Activated B cell treated with CpG ODN at 0.5 μM for 24 hours (primary cell): ENCODE measurements at regions of chr7 and their contacts with region 1.

Region 1: GRCh38 chr7:24819916-24820689 is 62.8 kb upstream of the GSDME start:
- DNase-seq: peak; percentile 45
- ATAC-seq: peak; percentile 56
- H3K4me3 Mint-ChIP-seq: peak overlapping the region; percentile 80
- H3K27ac Mint-ChIP-seq: peak overlapping the region; percentile 94
- H3K4me1 Mint-ChIP-seq: peaks cover 40% of the 10 kb centered on the region
- H3K27me3 Mint-ChIP-seq: no peaks in the 10 kb centered on the region
- CTCF ChIP-seq: peak; percentile 74

Region 2: GRCh38 chr7:23373151-23374004 is 1446.7 kb before region 1 on chr7:
- CTCF ChIA-PET with region 1: no interaction called
- POLR2A ChIA-PET with region 1: no interaction called
- intact Hi-C with region 1: loop called (anchors 10 kb)
- DNase-seq: peak; percentile 28
- ATAC-seq: peak; percentile 69
- H3K4me3 Mint-ChIP-seq: peak overlapping the region; percentile 68
- H3K27ac Mint-ChIP-seq: peak overlapping the region; percentile 94
- H3K4me1 Mint-ChIP-seq: peaks cover 70% of the 10 kb centered on the region
- H3K27me3 Mint-ChIP-seq: no peaks in the 10 kb centered on the region
- CTCF ChIP-seq: no peak

Region 3: DNA sequence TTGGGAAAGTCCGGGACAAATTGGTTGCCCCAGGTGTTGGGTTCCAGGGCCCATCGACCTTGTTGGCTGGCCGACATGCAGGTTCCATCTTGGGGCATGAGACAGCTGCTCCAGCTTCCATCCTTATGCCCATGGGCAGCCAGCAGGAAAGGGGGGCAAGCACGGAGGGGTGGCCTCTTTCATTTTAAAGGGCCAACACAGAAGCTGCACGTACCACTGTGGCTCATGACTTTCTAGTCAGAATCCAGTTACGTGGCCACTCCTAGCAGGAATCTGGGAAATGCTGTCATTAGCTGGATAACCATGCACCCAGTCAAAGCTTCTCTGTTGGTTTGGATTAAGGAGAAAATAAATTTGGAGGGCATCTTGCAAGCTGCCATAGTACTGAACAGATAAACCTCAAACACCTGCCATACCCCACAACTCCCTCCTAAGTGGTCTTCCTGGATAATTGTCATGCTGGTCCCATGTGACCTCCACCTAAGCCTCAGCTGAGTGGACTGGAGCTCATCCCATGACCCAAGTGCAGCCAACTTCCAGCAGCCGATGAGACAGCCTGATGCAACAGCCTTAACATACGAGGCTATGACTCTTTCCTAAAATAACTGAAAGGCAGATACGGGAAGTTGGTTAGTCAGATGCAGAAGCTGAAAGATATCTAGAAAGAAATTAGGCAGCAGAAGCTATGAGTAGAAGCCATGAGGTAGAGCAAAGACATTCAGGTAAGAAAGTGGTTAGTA is 41.4 kb before region 1 on chr7:
- CTCF ChIA-PET with region 1: no interaction called
- POLR2A ChIA-PET with region 1: no interaction called
- intact Hi-C with region 1: no loop called
- DNase-seq: no peak
- ATAC-seq: no peak
- H3K4me3 Mint-ChIP-seq: no peak overlapping the region
- H3K27ac Mint-ChIP-seq: no peak overlapping the region
- H3K4me1 Mint-ChIP-seq: peaks cover 6% of the 10 kb centered on the region
- H3K27me3 Mint-ChIP-seq: no peaks in the 10 kb centered on the region
- CTCF ChIP-seq: no peak

Region 4: GRCh38 chr7:24851786-24852185 is 31.7 kb after region 1 on chr7:
- CTCF ChIA-PET with region 1: interaction called, 5 read pairs
- POLR2A ChIA-PET with region 1: interaction called, 3 read pairs
- intact Hi-C with region 1: loop called (anchors 1 kb)
- DNase-seq: no peak
- ATAC-seq: no peak
- H3K4me3 Mint-ChIP-seq: no peak overlapping the region
- H3K27ac Mint-ChIP-seq: no peak overlapping the region
- H3K4me1 Mint-ChIP-seq: peaks cover 7% of the 10 kb centered on the region
- H3K27me3 Mint-ChIP-seq: no peaks in the 10 kb centered on the region
- CTCF ChIP-seq: no peak

Region 5: GRCh38 chr7:24907311-24907886 is 87.3 kb after region 1 on chr7:
- CTCF ChIA-PET with region 1: no interaction called
- POLR2A ChIA-PET with region 1: no interaction called
- intact Hi-C with region 1: loop called (anchors 2 kb)
- DNase-seq: no peak
- ATAC-seq: peak; percentile 62
- H3K4me3 Mint-ChIP-seq: no peak overlapping the region
- H3K27ac Mint-ChIP-seq: no peak overlapping the region
- H3K4me1 Mint-ChIP-seq: peaks cover 32% of the 10 kb centered on the region
- H3K27me3 Mint-ChIP-seq: no peaks in the 10 kb centered on the region
- CTCF ChIP-seq: no peak

Region 6: GRCh38 chr7:25069900-25070443 is 249.9 kb after region 1 on chr7:
- CTCF ChIA-PET with region 1: interaction called, 60 read pairs
- POLR2A ChIA-PET with region 1: interaction called, 13 read pairs
- intact Hi-C with region 1: loop called (anchors 1 kb)
- DNase-seq: no peak
- ATAC-seq: peak; percentile 49
- H3K4me3 Mint-ChIP-seq: no peak overlapping the region
- H3K27ac Mint-ChIP-seq: no peak overlapping the region
- H3K4me1 Mint-ChIP-seq: peaks cover 7% of the 10 kb centered on the region
- H3K27me3 Mint-ChIP-seq: no peaks in the 10 kb centered on the region
- CTCF ChIP-seq: peak; percentile 55

Region 7: GRCh38 chr7:25125137-25125946 is 305.2 kb after region 1 on chr7 and contains the start of gene CYCS:
- CTCF ChIA-PET with region 1: interaction called, 3 read pairs
- POLR2A ChIA-PET with region 1: interaction called, 11 read pairs
- intact Hi-C with region 1: no loop called
- DNase-seq: peak; percentile 98
- ATAC-seq: peak; percentile 91
- H3K4me3 Mint-ChIP-seq: peak within 1 kb of the TSS; percentile 99
- H3K27ac Mint-ChIP-seq: peak within 1 kb of the TSS; percentile 99
- H3K4me1 Mint-ChIP-seq: peaks cover 31% of the 10 kb centered on the region
- H3K27me3 Mint-ChIP-seq: peaks cover 1% of the 10 kb centered on the region
- CTCF ChIP-seq: no peak
- total RNA-seq, gene CYCS: 73.0 and 85.0 TPM in 2 replicates